Endothelial cell of umbilical vein (primary cell): ENCODE measurements at regions of chr11 and their contacts with region 1.

Region 1: GRCh38 chr11:93741094-93741881 is at the starts of genes C11orf54 and TAF1D:
- DNase-seq: peak; percentile 98
- H3K4me3 ChIP-seq: peak within 1 kb of the TSS; percentile 75 to 99 (median 93)
- H3K27ac ChIP-seq: peak within 1 kb of the TSS; percentile 54
- H3K4me1 ChIP-seq: peaks cover 28% of the 10 kb centered on the region
- H3K27me3 ChIP-seq: no peaks in the 10 kb centered on the region
- CTCF ChIP-seq: no peak
- POLR2A ChIP-seq: peak; percentile 99
- total RNA-seq, gene C11orf54: 17.7 and 18.7 TPM in 2 replicates
- total RNA-seq, gene TAF1D: 172 and 181 TPM in 2 replicates

Region 2: DNA sequence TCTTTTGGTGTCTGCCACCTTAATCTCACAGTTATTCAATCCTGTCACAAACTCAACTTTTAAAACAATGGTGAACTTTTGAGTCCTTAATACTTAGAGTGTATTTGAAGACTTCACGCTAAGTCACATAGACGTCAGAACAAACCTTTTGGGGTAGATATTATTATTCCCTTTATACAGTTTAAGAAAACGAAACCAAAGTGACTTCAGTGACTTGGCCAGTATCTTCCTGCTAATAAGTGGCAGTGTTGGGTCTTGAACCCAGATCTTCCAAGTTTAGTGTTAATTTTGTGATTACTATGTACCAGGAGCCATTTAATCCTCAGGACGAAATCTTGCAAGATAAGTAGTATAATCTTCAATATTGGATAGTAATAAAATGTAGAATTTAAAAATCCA is 79.1 kb before region 1 on chr11:
- CTCF ChIA-PET with region 1: no interaction called
- POLR2A ChIA-PET with region 1: interaction called, 3 read pairs
- dilution Hi-C with region 1: no loop called
- intact Hi-C with region 1: loop called (anchors 1 kb)
- DNase-seq: no peak
- H3K4me3 ChIP-seq: peak overlapping the region; percentile 29 to 100 (median 93)
- H3K27ac ChIP-seq: peak overlapping the region; percentile 37
- H3K4me1 ChIP-seq: peaks cover 9% of the 10 kb centered on the region
- H3K27me3 ChIP-seq: peaks cover 10 to 12% of the 10 kb centered on the region in 2 experiments
- CTCF ChIP-seq: no peak
- POLR2A ChIP-seq: no peak

Region 3: DNA sequence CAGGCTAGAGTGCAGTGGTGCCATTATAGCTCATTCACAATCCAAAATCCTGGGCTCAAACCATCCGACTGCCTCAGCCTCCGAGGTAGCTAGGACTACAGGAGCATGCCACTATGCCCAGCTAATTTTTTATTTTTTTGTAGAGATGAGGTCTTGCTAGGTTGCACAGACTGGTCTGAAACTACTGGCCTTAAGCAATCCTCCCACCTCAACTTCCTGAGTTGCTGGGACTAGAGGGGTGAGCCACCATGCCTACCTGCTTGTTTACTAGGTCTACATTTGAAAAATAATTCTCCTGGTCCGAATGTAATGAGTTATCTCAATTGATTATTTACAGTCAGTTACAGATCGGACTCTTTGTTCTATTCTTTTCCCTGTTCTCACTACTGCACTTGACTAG is 22.0 kb before region 1 on chr11:
- CTCF ChIA-PET with region 1: interaction called, 5 read pairs
- POLR2A ChIA-PET with region 1: interaction called, 10 read pairs
- dilution Hi-C with region 1: no loop called
- intact Hi-C with region 1: no loop called
- DNase-seq: no peak
- H3K4me3 ChIP-seq: no peak overlapping the region
- H3K27ac ChIP-seq: no peak overlapping the region
- H3K4me1 ChIP-seq: peaks cover 16% of the 10 kb centered on the region
- H3K27me3 ChIP-seq: no peaks in the 10 kb centered on the region
- CTCF ChIP-seq: no peak
- POLR2A ChIP-seq: no peak

Region 4: GRCh38 chr11:93784152-93784934 is 43.1 kb after region 1 on chr11 and contains the start of gene MED17:
- CTCF ChIA-PET with region 1: interaction called, 16 read pairs
- POLR2A ChIA-PET with region 1: interaction called, 47 read pairs
- dilution Hi-C with region 1: no loop called
- intact Hi-C with region 1: loop called (anchors 1 kb)
- DNase-seq: peak; percentile 93
- H3K4me3 ChIP-seq: peak within 1 kb of the TSS; percentile 81 to 96 (median 85)
- H3K27ac ChIP-seq: peak within 1 kb of the TSS; percentile 87
- H3K4me1 ChIP-seq: peaks cover 22% of the 10 kb centered on the region
- H3K27me3 ChIP-seq: no peaks in the 10 kb centered on the region
- CTCF ChIP-seq: peak; percentile 16 to 32
- POLR2A ChIP-seq: peak; percentile 94
- total RNA-seq, gene MED17: 33.5 and 40.6 TPM in 2 replicates

Region 5: GRCh38 chr11:93814966-93815633 is 73.8 kb after region 1 on chr11:
- CTCF ChIA-PET with region 1: no interaction called
- POLR2A ChIA-PET with region 1: no interaction called
- dilution Hi-C with region 1: no loop called
- intact Hi-C with region 1: no loop called
- DNase-seq: no peak
- H3K4me3 ChIP-seq: no peak overlapping the region
- H3K27ac ChIP-seq: no peak overlapping the region
- H3K4me1 ChIP-seq: no peaks in the 10 kb centered on the region
- H3K27me3 ChIP-seq: no peaks in the 10 kb centered on the region
- CTCF ChIP-seq: no peak
- POLR2A ChIP-seq: no peak

Region 6: GRCh38 chr11:93969921-93970567 is 228.8 kb after region 1 on chr11:
- CTCF ChIA-PET with region 1: no interaction called
- POLR2A ChIA-PET with region 1: no interaction called
- dilution Hi-C with region 1: no loop called
- intact Hi-C with region 1: no loop called
- DNase-seq: no peak
- H3K4me3 ChIP-seq: no peak overlapping the region
- H3K27ac ChIP-seq: no peak overlapping the region
- H3K4me1 ChIP-seq: no peaks in the 10 kb centered on the region
- H3K27me3 ChIP-seq: no peaks in the 10 kb centered on the region
- CTCF ChIP-seq: no peak
- POLR2A ChIP-seq: no peak

Region 7: GRCh38 chr11:94493281-94494125 is 752.2 kb after region 1 on chr11 and contains the starts of genes ANKRD49 and MRE11:
- CTCF ChIA-PET with region 1: no interaction called
- POLR2A ChIA-PET with region 1: interaction called, 3 read pairs
- dilution Hi-C with region 1: no loop called
- intact Hi-C with region 1: loop called (anchors 10 kb)
- DNase-seq: peak; percentile 100
- H3K4me3 ChIP-seq: peak within 1 kb of the TSS; percentile 68 to 91 (median 85)
- H3K27ac ChIP-seq: peak within 1 kb of the TSS; percentile 56
- H3K4me1 ChIP-seq: peaks cover 16% of the 10 kb centered on the region
- H3K27me3 ChIP-seq: no peaks in the 10 kb centered on the region
- CTCF ChIP-seq: no peak
- POLR2A ChIP-seq: peak; percentile 62
- total RNA-seq, gene ANKRD49: 7.6 and 8.0 TPM in 2 replicates
- total RNA-seq, gene MRE11: 22.0 and 25.3 TPM in 2 replicates